ENCODE measurements at regions of chr7 and their contacts with region 1.

Region 1: GRCh38 chr7:64307254-64308015 is 6.3 kb upstream of the ZNF736 start:
- DNase-seq: peak; percentile 91
- H3K4me3 Mint-ChIP-seq: peak overlapping the region; percentile 89
- H3K27ac Mint-ChIP-seq: peak overlapping the region; percentile 88
- H3K4me1 Mint-ChIP-seq: peaks cover 17% of the 10 kb centered on the region
- H3K27me3 Mint-ChIP-seq: no peaks in the 10 kb centered on the region

Region 2: DNA sequence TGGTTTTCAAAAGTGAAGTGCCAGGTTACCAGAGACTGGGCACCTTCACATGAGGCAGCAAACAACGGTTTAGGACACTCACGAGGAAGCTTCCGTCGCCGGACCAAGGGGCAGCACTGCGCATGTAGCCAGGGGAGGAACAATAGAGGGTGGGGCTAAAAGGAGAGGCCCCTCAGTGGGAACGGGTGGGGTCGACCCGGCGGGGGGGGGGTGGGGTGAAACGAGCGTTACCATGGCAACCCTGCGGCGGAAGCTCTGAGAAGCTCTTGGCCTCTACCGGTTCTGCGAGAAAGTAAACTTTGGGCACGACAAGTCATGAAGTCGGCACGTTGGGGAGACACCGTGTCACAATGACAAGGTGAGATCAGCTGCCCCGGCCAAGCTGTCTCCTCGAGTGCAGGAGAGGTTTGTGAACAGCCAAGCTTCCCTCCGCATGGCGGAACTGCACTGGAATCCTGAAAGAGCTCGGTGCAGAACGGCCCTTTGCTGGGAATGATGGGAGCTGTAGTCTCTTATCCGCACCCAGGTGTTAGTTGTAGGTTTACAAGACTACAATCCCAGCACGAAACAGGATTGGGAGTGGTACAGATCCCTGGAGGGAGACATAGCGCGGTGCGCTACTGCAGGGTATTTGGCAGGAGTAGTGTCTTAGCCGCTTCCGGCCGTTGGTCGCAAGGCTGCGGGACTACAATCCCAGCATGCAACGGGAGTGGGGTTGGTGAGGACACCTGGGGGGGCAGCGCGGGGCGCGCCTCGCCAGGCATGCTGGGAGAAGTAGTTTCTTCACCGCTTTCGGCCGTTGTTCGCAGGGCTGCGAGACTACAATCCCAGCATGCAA is 381.6 kb before region 1 on chr7:
- intact Hi-C with region 1: loop called (anchors 1 kb)
- DNase-seq: peak; percentile 74
- H3K4me3 Mint-ChIP-seq: peak overlapping the region; percentile 89
- H3K27ac Mint-ChIP-seq: peak overlapping the region; percentile 89
- H3K4me1 Mint-ChIP-seq: peaks cover 6% of the 10 kb centered on the region
- H3K27me3 Mint-ChIP-seq: no peaks in the 10 kb centered on the region

Region 3: DNA sequence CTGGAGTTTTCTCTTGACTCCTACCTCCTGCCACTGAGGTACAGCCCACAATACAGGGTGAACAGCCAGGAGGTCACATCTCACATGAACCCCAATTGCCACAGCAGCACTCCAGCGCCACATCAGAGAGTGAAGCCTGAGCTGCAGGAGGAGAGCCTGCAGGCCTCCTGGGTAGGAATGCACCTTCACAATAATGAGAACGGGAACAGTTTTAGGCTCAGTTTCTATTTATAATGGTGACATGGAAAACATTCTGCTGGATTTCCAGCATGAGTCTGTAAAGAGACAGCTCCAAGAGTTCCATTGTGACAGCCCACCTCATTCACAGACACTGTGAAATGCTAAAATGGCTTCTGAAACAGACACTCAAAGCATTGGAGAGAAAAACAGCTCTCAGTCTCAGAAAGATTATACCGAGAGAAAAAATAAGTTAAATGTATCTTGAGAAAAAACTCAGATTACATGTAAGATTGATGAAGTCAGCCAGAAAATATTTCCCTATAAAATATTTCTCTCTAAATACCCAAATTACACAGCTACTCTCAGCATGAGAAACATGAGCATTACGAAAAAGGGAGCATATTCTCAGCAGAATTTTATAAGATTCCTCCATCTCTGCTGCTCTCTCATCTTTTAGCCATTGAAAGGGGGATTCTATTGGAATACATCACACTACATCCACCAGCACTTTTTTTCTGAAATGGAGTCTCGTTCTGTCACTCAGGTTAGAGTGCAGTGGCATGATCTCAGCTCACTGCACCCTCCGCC is 244.1 kb after region 1 on chr7:
- intact Hi-C with region 1: no loop called
- DNase-seq: no peak
- H3K4me3 Mint-ChIP-seq: no peak overlapping the region
- H3K27ac Mint-ChIP-seq: no peak overlapping the region
- H3K4me1 Mint-ChIP-seq: no peaks in the 10 kb centered on the region
- H3K27me3 Mint-ChIP-seq: no peaks in the 10 kb centered on the region

Region 4: DNA sequence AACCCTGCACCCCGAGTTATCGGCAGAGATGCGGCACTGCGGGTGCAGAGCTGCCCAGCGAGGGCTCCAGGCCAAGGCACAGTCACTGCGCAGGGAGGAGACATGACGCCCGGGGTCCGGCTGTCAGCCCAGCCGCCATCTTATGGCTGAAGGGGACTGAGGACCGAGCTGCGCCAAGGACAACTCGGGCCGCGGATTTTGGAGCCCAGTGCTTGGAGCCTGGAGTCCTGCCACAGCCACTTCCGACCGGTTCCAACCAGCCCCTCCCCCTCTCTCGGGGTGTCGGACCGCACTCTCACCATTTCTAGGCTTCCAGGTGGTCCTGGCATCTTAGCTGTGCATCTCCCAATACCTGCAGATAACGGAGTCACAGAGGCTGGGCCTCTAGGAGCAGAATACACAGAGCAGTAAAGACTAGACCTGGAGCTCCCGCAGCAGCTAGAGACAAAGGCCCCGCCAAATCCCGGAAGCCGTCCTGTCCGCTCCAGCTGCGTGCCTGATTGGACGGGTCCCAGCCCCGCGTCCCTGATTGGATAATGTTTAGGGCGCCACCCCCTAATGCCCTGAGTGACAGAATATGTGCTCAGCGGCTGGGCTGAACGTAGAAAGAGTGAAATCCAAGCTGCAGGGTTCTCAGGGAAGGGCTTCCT is 255.3 kb after region 1 on chr7 and contains the start of gene ZNF680:
- intact Hi-C with region 1: loop called (anchors 1 kb)
- DNase-seq: peak; percentile 85
- H3K4me3 Mint-ChIP-seq: peak within 1 kb of the TSS; percentile 99
- H3K27ac Mint-ChIP-seq: peak within 1 kb of the TSS; percentile 98
- H3K4me1 Mint-ChIP-seq: peaks cover 18% of the 10 kb centered on the region
- H3K27me3 Mint-ChIP-seq: no peaks in the 10 kb centered on the region
- total RNA-seq, gene ZNF680: 8.5 and 12.2 TPM in 2 replicates

Region 5: GRCh38 chr7:64794171-64794844 is 486.9 kb after region 1 on chr7 and contains the start of gene ZNF138:
- intact Hi-C with region 1: loop called (anchors 2 kb)
- DNase-seq: peak; percentile 90
- H3K4me3 Mint-ChIP-seq: peak within 1 kb of the TSS; percentile 98
- H3K27ac Mint-ChIP-seq: peak within 1 kb of the TSS; percentile 98
- H3K4me1 Mint-ChIP-seq: peaks cover 21% of the 10 kb centered on the region
- H3K27me3 Mint-ChIP-seq: no peaks in the 10 kb centered on the region
- total RNA-seq, gene ZNF138: 7.7 and 7.9 TPM in 2 replicates